Panc1 (cell line): ENCODE measurements at regions of chr9 and their contacts with region 1.

Region 1: DNA sequence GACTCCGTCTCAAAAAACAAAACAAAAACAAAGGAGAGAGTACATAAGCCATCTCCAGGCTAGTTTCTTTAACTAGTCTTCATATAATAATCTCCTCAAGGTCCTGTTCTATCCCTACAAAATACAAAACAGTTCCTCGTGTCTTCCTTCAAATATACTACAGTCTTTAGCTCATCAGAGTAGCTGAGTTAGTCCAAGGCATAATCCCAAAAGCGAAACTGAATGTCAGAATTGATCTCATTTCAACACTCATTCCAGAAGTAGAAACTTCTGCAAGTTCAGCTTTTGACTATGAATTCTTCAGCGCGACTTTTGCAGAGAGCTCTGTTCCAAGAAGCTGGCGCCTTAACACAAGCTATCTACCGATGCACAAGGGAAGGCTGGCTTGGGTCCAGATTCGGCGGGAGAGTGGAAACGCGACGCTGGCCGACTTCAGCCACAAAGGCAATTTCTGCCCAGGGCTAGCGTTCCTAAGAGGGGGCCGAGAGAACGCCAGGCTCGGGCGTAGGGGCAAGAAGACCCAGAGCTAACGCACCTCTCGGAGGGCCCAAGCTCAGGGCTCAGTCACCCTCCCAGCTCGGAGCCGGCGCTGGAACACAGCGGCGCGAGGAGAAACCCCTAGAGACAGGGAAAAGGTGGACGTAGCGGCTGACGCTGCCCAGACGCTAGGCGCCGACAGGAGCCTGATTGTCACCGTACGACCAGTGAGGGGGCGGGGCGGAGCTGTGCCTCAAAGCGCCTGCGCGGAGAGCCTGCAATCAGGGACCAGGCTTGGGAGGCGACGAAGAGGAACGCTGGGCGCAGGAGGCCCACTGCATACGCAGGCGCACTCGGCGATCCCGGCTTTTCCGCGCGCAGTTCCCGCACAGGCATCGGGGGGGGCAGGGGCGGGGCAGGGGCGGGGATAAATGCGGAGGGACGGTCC is 469 bp upstream of the HSDL2 start:
- DNase-seq: peak; percentile 78
- ATAC-seq: peak; percentile 97
- H3K4me3 ChIP-seq: peak overlapping the region; percentile 82 to 89
- H3K27ac ChIP-seq: peak overlapping the region; percentile 94
- H3K4me1 ChIP-seq: peaks cover 7% of the 10 kb centered on the region
- H3K27me3 ChIP-seq: no peaks in the 10 kb centered on the region
- CTCF ChIP-seq: no peak

Region 2: GRCh38 chr9:112348257-112349007 is 31.0 kb before region 1 on chr9:
- CTCF ChIA-PET with region 1: no interaction called
- POLR2A ChIA-PET with region 1: interaction called, 18 read pairs
- in situ Hi-C with region 1: no loop called
- intact Hi-C with region 1: no loop called
- DNase-seq: no peak
- ATAC-seq: peak; percentile 92
- H3K4me3 ChIP-seq: peak overlapping the region; percentile 34 to 66
- H3K27ac ChIP-seq: peak overlapping the region; percentile 77
- H3K4me1 ChIP-seq: no peaks in the 10 kb centered on the region
- H3K27me3 ChIP-seq: no peaks in the 10 kb centered on the region
- CTCF ChIP-seq: no peak